Caco-2 (cell line): ENCODE measurements at regions of chr5 and their contacts with region 1.

Region 1: DNA sequence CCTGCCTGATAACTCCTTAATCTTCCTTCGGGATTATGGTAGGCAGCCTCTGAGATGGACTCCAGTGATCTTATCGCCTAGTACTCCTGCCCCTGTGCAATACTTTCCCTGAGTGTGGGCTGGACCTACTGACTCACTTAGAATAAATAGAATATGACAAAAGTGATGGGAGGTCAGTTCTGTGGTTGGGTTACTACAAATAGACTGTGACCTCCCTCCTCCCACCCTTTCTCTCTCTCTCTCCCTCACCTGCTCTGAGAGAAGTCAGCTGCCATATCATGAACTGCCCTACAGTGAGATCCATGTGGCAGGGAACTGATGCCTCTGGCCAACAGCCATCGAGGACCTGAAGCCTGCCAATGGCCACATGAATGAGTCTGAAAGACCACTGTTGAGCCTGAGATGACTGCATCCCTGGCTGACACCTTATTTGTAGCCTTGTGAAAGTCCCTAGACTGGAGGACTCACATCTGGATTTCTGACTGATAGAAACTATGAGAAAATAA is 31.7 kb downstream of the NRG2 start:
- DNase-seq: peak; percentile 60 to 72
- H3K4me3 ChIP-seq: no peak overlapping the region
- H3K4me3 Mint-ChIP-seq: no peak overlapping the region
- H3K27ac Mint-ChIP-seq: no peak overlapping the region
- H3K4me1 ChIP-seq: peaks cover 20% of the 10 kb centered on the region
- H3K4me1 Mint-ChIP-seq: no peaks in the 10 kb centered on the region
- H3K27me3 ChIP-seq: no peaks in the 10 kb centered on the region
- H3K27me3 Mint-ChIP-seq: no peaks in the 10 kb centered on the region
- CTCF ChIP-seq: no peak

Region 2: DNA sequence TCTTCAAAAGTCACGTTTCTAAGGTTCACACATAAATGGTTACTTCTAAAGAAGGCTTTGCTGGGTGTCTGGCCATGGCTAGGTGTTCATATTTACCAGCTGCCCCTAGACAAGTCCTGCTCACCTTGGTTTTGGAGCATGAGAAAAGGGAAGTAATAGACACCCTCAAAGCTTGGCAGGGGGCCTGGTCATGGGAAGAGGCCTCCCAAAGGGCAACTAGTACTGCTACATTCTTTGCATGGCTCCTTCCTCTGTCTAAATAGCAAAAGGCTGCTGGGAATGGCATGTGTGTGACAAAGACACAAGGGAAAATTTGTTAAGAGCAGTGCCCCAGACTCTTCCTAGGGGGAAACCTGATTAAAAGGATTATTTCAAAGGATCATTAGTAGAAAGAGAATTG is 61.6 kb before region 1 on chr5:
- CTCF ChIA-PET with region 1: no interaction called
- POLR2A ChIA-PET with region 1: no interaction called
- intact Hi-C with region 1: no loop called
- DNase-seq: no peak
- H3K4me3 ChIP-seq: no peak overlapping the region
- H3K4me3 Mint-ChIP-seq: no peak overlapping the region
- H3K27ac Mint-ChIP-seq: no peak overlapping the region
- H3K4me1 ChIP-seq: no peaks in the 10 kb centered on the region
- H3K4me1 Mint-ChIP-seq: no peaks in the 10 kb centered on the region
- H3K27me3 ChIP-seq: no peaks in the 10 kb centered on the region; the same call in 1 of the 2 replicates
- H3K27me3 Mint-ChIP-seq: peaks cover 21% of the 10 kb centered on the region
- CTCF ChIP-seq: no peak

Region 3: GRCh38 chr5:140023611-140024191 is 12.4 kb after region 1 on chr5:
- CTCF ChIA-PET with region 1: interaction called, 4 read pairs
- POLR2A ChIA-PET with region 1: no interaction called
- intact Hi-C with region 1: loop called (anchors 1 kb)
- DNase-seq: no peak
- H3K4me3 ChIP-seq: no peak overlapping the region
- H3K4me3 Mint-ChIP-seq: no peak overlapping the region
- H3K27ac Mint-ChIP-seq: no peak overlapping the region
- H3K4me1 ChIP-seq: peaks cover 33% of the 10 kb centered on the region
- H3K4me1 Mint-ChIP-seq: peaks cover 7% of the 10 kb centered on the region
- H3K27me3 ChIP-seq: no peaks in the 10 kb centered on the region
- H3K27me3 Mint-ChIP-seq: no peaks in the 10 kb centered on the region
- CTCF ChIP-seq: no peak

Region 4: GRCh38 chr5:140058212-140058932 is 47.0 kb after region 1 on chr5:
- CTCF ChIA-PET with region 1: no interaction called
- POLR2A ChIA-PET with region 1: no interaction called
- intact Hi-C with region 1: loop called (anchors 2 kb)
- DNase-seq: no peak
- H3K4me3 ChIP-seq: no peak overlapping the region
- H3K4me3 Mint-ChIP-seq: no peak overlapping the region
- H3K27ac Mint-ChIP-seq: no peak overlapping the region
- H3K4me1 ChIP-seq: no peaks in the 10 kb centered on the region
- H3K4me1 Mint-ChIP-seq: no peaks in the 10 kb centered on the region
- H3K27me3 ChIP-seq: no peaks in the 10 kb centered on the region; the same call in 1 of the 2 replicates
- H3K27me3 Mint-ChIP-seq: peaks cover 12% of the 10 kb centered on the region
- CTCF ChIP-seq: no peak

Region 5: GRCh38 chr5:140795259-140795641 is 783.9 kb after region 1 on chr5:
- CTCF ChIA-PET with region 1: no interaction called
- POLR2A ChIA-PET with region 1: no interaction called
- intact Hi-C with region 1: no loop called
- DNase-seq: peak in 1 of 2 experiments; percentile 12
- H3K4me3 ChIP-seq: no peak overlapping the region
- H3K4me3 Mint-ChIP-seq: no peak overlapping the region
- H3K27ac Mint-ChIP-seq: no peak overlapping the region
- H3K4me1 ChIP-seq: no peaks in the 10 kb centered on the region
- H3K4me1 Mint-ChIP-seq: no peaks in the 10 kb centered on the region
- H3K27me3 ChIP-seq: no peaks in the 10 kb centered on the region
- H3K27me3 Mint-ChIP-seq: no peaks in the 10 kb centered on the region
- CTCF ChIP-seq: no peak